ENCODE measurements at regions of chr7 and their contacts with region 1.

Region 1: GRCh38 chr7:101171442-101171837 is 6.1 kb upstream of the VGF start:
- DNase-seq: no peak
- ATAC-seq: no peak
- H3K4me3 ChIP-seq: 0 out of 4 replicates have a peak overlapping the region, but pooled peaks of 1 of the 2 experiments have one; percentile 62
- H3K27ac ChIP-seq: no peak overlapping the region
- H3K4me1 ChIP-seq: peaks cover 44% of the 10 kb centered on the region
- H3K27me3 ChIP-seq: peaks cover 16% of the 10 kb centered on the region
- CTCF ChIP-seq: peak; percentile 55

Region 2: GRCh38 chr7:100586266-100587025 is 585.0 kb before region 1 on chr7 and contains the start of gene FBXO24:
- CTCF ChIA-PET with region 1: no interaction called
- POLR2A ChIA-PET with region 1: no interaction called
- in situ Hi-C with region 1: no loop called
- intact Hi-C with region 1: no loop called
- DNase-seq: peak; percentile 100
- ATAC-seq: peak; percentile 95
- H3K4me3 ChIP-seq: peak within 1 kb of the TSS; percentile 89 to 93
- H3K27ac ChIP-seq: peak within 1 kb of the TSS; percentile 86
- H3K4me1 ChIP-seq: peaks cover 12% of the 10 kb centered on the region
- H3K27me3 ChIP-seq: no peaks in the 10 kb centered on the region
- CTCF ChIP-seq: no peak
- total RNA-seq, gene FBXO24: 0.59 TPM

Region 3: GRCh38 chr7:101085162-101085987 is 86.1 kb before region 1 on chr7 and contains the start of gene TRIM56:
- CTCF ChIA-PET with region 1: no interaction called
- POLR2A ChIA-PET with region 1: interaction called, 11 read pairs
- in situ Hi-C with region 1: no loop called
- intact Hi-C with region 1: no loop called
- DNase-seq: no peak
- ATAC-seq: peak; percentile 94
- H3K4me3 ChIP-seq: peak within 1 kb of the TSS; percentile 65 to 87
- H3K27ac ChIP-seq: peak within 1 kb of the TSS; percentile 97
- H3K4me1 ChIP-seq: peaks cover 14% of the 10 kb centered on the region
- H3K27me3 ChIP-seq: no peaks in the 10 kb centered on the region
- CTCF ChIP-seq: no peak
- total RNA-seq, gene TRIM56: 37.4 TPM

Region 4: DNA sequence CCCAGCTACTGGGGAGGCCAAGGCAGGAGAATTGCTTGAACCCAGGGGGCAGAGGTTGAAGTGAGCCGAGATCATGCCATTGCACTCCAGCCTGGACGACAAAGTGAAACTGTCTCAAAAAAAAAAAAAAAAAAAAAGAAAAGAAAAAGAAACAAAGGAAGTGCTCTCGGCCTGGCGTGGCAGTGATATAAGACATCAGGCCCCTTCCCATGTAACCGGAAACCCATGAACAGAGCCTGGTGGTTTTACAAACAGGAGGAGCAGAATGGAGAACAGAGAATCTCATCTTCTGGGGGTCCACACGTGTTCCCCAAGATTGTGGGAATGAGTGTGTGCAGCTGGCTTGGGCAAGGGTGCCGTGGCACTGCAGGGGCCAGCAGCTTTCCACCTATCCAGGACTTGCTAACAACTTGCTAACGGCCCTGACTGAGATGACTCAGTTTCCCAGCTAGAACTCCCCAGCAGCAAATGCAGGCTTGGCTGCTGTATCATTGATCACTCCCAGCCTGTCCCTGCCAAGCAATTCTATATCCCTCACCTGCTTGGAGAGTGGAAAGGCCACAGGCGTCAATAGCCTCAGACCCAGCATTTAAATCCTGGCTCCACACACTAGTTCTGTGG is 294.2 kb after region 1 on chr7:
- CTCF ChIA-PET with region 1: no interaction called
- POLR2A ChIA-PET with region 1: no interaction called
- in situ Hi-C with region 1: no loop called
- intact Hi-C with region 1: no loop called
- DNase-seq: no peak
- ATAC-seq: no peak
- H3K4me3 ChIP-seq: no peak overlapping the region
- H3K27ac ChIP-seq: no peak overlapping the region; the same call in 1 of the 2 replicates
- H3K4me1 ChIP-seq: peaks cover 12% of the 10 kb centered on the region; the same call in 1 of the 2 replicates
- H3K27me3 ChIP-seq: no peaks in the 10 kb centered on the region
- CTCF ChIP-seq: no peak

Measured in Panc1 (cell line).